ENCODE measurements at regions of chr14 and their contacts with region 1.

Region 1: DNA sequence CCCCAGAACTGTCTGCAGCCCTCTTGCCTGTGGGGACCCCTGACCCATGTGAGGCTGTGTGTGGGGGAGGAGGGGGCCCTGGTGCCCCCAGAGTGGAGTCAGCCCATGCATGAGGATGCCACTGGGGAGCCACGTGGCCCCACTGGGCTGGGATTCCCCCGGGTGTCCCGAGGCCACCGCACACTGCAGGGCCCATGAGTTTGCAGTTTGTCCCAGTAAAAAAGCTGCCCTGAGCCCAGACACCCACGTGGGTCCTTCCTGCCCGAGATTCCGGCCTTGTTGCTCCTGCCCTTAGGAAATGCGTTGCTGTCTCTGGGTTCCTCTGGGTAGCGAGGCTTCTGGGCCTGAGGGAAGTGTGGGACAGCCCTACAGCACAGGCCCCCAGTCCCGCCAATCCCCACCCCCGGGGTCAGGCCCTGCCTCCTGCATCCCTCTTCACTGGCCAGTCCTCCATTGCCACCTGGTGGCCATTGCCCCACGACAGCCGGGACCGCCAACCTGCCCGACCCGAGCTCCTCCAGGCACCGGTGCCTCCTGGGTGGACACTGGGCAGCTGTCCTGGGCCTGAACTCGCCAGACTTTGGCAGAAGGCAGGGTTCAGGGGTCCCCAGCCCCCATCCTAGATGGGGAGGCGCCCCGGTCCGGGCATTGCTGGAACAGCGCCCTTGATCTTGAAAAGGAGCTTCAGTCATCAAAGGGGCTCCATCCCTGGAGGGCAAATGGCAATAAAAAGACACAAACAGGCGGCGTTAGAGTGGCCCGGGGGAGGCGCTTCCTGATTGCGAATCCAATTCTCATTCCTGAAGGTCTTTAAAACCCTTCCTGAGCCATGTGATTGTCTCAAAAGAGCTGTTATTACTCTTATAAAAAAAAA is 15.6 kb upstream of the C14orf180 start:
- DNase-seq: peak; percentile 82
- ATAC-seq: peak; percentile 85

Region 2: DNA sequence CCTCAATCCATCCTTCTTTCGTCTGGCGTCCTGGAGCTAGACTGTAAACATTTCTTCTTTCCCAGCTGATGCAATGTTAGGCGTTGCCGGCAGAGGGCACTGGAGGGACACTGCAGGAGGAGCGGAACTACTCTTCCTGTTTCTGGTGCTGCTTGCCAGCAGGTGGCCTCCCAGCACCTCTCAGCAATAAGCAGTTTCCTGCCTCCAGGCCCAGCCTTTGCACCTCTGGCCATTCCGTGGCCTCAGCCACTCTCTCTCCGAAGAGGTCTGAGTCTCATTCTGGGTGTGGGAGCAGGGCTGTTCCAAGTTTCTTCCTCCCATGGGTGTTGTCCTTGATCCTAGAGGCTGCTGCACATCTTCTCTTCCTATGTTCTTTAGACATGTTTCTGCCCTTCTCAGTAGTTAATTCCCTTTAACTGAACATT is 485.9 kb before region 1 on chr14:
- intact Hi-C with region 1: loop called (anchors 5 kb)
- DNase-seq: peak; percentile 89
- ATAC-seq: peak; percentile 89

Region 3: GRCh38 chr14:104137297-104138097 is 426.5 kb before region 1 on chr14:
- intact Hi-C with region 1: loop called (anchors 2 kb)
- DNase-seq: peak; percentile 80
- ATAC-seq: peak; percentile 95

Measured in Right ventricle myocardium superior (tissue), 1 donor.